CD14-positive monocyte (primary cell): ENCODE measurements at regions of chr3 and their contacts with region 1.

Region 1: GRCh38 chr3:169863458-169863899 is 6.3 kb downstream of the LRRC31 start:
- DNase-seq: peak; percentile 72 to 80 (median 80)
- H3K4me3 ChIP-seq: no peak overlapping the region
- H3K4me3 Mint-ChIP-seq: no peak overlapping the region
- H3K27ac ChIP-seq: no peak overlapping the region
- H3K27ac Mint-ChIP-seq: no peak overlapping the region
- H3K4me1 ChIP-seq: peaks cover 10 to 13% of the 10 kb centered on the region in 2 donors
- H3K4me1 Mint-ChIP-seq: peaks cover 18% of the 10 kb centered on the region
- H3K27me3 ChIP-seq: no peaks in the 10 kb centered on the region
- H3K27me3 Mint-ChIP-seq: peaks cover 3 to 14% (median 3%) of the 10 kb centered on the region in 3 donors
- CTCF ChIP-seq: peak; percentile 94

Region 2: DNA sequence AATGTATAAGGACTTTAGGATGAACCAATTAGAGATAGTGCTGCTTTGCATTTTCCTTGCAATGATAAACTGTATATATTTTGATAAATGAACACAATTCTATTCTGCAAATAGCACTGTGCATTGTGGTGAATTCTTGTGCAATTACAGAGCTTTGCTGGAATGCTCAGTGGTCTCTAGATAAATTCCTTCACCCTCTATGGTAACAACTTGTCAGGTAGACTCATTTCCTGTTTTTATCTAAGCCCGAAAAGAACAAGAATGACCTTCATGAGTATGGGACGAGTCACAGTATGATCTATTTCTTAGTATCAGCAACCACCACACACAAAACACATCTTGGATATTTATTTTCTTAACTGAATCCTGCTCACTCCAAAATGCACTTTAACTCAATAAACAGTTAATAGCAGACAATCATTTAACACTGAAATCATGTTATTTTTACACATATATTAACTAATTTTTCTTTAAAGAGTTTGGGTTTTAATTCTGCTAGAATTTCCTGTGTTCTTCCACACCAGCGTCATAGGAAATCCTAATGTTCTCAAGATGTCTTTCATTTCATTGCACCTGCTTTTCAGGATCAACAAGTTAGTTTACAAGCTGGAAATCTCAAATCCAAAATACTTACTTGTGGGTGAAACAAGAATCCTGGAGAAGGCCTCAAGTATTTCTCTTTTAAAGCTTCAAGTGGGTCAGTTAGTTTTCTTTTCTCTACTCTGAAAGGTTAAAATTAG is 751.2 kb before region 1 on chr3:
- intact Hi-C with region 1: no loop called
- DNase-seq: no peak
- H3K4me3 ChIP-seq: no peak overlapping the region
- H3K4me3 Mint-ChIP-seq: no peak overlapping the region
- H3K27ac ChIP-seq: no peak overlapping the region
- H3K27ac Mint-ChIP-seq: no peak overlapping the region
- H3K4me1 ChIP-seq: no peaks in the 10 kb centered on the region
- H3K4me1 Mint-ChIP-seq: no peaks in the 10 kb centered on the region
- H3K27me3 ChIP-seq: no peaks in the 10 kb centered on the region
- H3K27me3 Mint-ChIP-seq: peaks cover 0 to 2% (median 0%) of the 10 kb centered on the region in 3 donors
- CTCF ChIP-seq: no peak

Region 3: GRCh38 chr3:169764452-169765274 is 98.8 kb before region 1 on chr3 and contains the start of gene TERC:
- intact Hi-C with region 1: loop called in 1 of 2 experiments (anchors 10 kb)
- DNase-seq: peak; percentile 80 to 89 (median 81)
- H3K4me3 ChIP-seq: peak within 1 kb of the TSS; percentile 70 to 95 (median 79)
- H3K4me3 Mint-ChIP-seq: peak within 1 kb of the TSS; percentile 98 to 99
- H3K27ac ChIP-seq: peak within 1 kb of the TSS; percentile 88 to 93
- H3K27ac Mint-ChIP-seq: peak within 1 kb of the TSS; percentile 91 to 99 (median 96)
- H3K4me1 ChIP-seq: peaks cover 12 to 14% of the 10 kb centered on the region in 2 donors
- H3K4me1 Mint-ChIP-seq: peaks cover 12% of the 10 kb centered on the region
- H3K27me3 ChIP-seq: no peaks in the 10 kb centered on the region
- H3K27me3 Mint-ChIP-seq: peaks cover 2 to 6% (median 3%) of the 10 kb centered on the region in 3 donors
- CTCF ChIP-seq: no peak
- polyA plus RNA-seq, gene TERC: 0.33 to 0.76 TPM in 2 of 3 donors, not detected in the other

Region 4: GRCh38 chr3:169780742-169781141 is 82.7 kb before region 1 on chr3:
- intact Hi-C with region 1: no loop called
- DNase-seq: no peak
- H3K4me3 ChIP-seq: no peak overlapping the region
- H3K4me3 Mint-ChIP-seq: no peak overlapping the region
- H3K27ac ChIP-seq: no peak overlapping the region
- H3K27ac Mint-ChIP-seq: no peak overlapping the region
- H3K4me1 ChIP-seq: no peaks in the 10 kb centered on the region
- H3K4me1 Mint-ChIP-seq: peaks cover 8% of the 10 kb centered on the region
- H3K27me3 ChIP-seq: no peaks in the 10 kb centered on the region
- H3K27me3 Mint-ChIP-seq: no peaks in the 10 kb centered on the region
- CTCF ChIP-seq: no peak

Region 5: GRCh38 chr3:169923189-169923588 is 59.7 kb after region 1 on chr3:
- intact Hi-C with region 1: loop called in 1 of 2 experiments (anchors 10 kb)
- DNase-seq: no peak
- H3K4me3 ChIP-seq: no peak overlapping the region
- H3K4me3 Mint-ChIP-seq: no peak overlapping the region
- H3K27ac ChIP-seq: no peak overlapping the region
- H3K27ac Mint-ChIP-seq: peak overlapping the region in 1 of 7 donors; percentile 46
- H3K4me1 ChIP-seq: no peaks in the 10 kb centered on the region
- H3K4me1 Mint-ChIP-seq: no peaks in the 10 kb centered on the region
- H3K27me3 ChIP-seq: no peaks in the 10 kb centered on the region
- H3K27me3 Mint-ChIP-seq: no peaks in the 10 kb centered on the region
- CTCF ChIP-seq: no peak

Region 6: DNA sequence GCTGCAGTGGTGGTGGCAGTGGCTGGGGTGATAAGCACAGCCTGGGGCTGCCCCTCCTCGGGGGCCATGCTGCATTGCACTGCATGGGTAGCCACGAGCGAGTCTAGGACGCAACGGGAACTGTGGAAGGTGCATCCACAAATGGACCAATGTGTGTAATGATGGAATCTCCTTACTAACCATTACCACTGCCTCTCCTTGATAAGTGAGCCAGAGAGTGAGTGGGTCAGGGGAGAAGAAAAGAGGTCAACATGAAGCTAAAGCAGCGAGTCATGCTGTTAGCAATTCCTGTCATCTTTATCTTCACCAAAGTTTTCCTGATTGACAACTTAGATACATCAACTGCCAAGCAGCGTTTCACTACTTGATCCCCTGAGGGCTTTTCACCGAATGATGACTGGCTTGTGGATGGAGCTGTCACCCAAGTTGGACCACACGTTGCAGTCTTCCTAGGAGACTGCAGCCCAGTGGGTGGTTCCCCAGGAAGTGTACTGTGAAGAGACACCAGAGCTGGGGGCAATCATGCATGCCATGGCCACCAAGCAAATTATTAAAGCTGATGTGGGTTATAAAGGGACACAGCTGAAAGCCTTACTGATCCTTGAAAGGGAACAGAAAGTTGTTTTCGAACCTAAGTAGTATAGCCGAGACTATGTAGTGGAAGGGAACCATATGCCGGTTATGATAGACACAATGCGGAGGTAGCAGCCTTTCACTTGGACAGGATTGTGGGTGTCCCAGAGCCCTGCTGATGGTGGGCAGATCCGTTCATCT is 68.5 kb after region 1 on chr3:
- intact Hi-C with region 1: loop called (anchors 10 kb)
- DNase-seq: no peak
- H3K4me3 ChIP-seq: no peak overlapping the region
- H3K4me3 Mint-ChIP-seq: no peak overlapping the region
- H3K27ac ChIP-seq: no peak overlapping the region
- H3K27ac Mint-ChIP-seq: no peak overlapping the region
- H3K4me1 ChIP-seq: peaks cover 0 to 3% of the 10 kb centered on the region in 2 donors
- H3K4me1 Mint-ChIP-seq: peaks cover 4% of the 10 kb centered on the region
- H3K27me3 ChIP-seq: no peaks in the 10 kb centered on the region
- H3K27me3 Mint-ChIP-seq: peaks cover 0 to 10% (median 2%) of the 10 kb centered on the region in 3 donors
- CTCF ChIP-seq: no peak

Region 7: DNA sequence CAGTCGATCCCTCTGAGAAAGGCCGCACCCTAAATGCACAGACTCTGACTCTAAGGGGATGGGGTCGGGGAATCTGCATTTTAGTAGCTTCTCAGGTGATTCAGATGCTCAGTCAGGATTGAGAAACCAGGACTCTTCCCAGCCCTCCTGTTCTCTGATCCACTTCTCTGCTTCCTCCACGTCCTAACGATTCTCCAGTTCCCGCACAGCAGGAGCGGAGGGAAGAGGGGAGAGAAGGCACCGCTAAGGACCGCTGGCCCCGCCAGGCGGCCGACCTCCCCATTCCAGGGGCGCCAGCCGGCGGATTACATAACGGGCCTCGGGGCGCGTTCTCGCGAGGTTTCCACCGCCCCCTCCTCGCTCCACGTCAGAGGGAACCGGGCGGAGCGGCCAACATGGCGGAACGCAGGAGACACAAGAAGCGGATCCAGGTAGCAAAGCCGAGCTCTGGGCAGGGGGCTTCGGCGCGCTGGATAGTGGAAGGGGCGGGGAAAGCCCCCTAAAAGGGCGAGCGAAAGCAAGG is 103.0 kb after region 1 on chr3 and contains the start of gene SEC62:
- intact Hi-C with region 1: loop called (anchors 10 kb)
- DNase-seq: peak; percentile 93 to 95 (median 94)
- H3K4me3 ChIP-seq: peak within 1 kb of the TSS; percentile 78 to 88 (median 81)
- H3K4me3 Mint-ChIP-seq: peak within 1 kb of the TSS; percentile 93 to 94
- H3K27ac ChIP-seq: peak within 1 kb of the TSS; percentile 95 to 98
- H3K27ac Mint-ChIP-seq: peak within 1 kb of the TSS; percentile 96 to 99 (median 98)
- H3K4me1 ChIP-seq: peaks cover 27 to 36% of the 10 kb centered on the region in 2 donors
- H3K4me1 Mint-ChIP-seq: peaks cover 46% of the 10 kb centered on the region
- H3K27me3 ChIP-seq: no peaks in the 10 kb centered on the region
- H3K27me3 Mint-ChIP-seq: peaks cover 0 to 2% (median 2%) of the 10 kb centered on the region in 3 donors
- CTCF ChIP-seq: peak; percentile 59
- polyA plus RNA-seq, gene SEC62: 15.6 to 117 (median 95.2) TPM

Region 8: DNA sequence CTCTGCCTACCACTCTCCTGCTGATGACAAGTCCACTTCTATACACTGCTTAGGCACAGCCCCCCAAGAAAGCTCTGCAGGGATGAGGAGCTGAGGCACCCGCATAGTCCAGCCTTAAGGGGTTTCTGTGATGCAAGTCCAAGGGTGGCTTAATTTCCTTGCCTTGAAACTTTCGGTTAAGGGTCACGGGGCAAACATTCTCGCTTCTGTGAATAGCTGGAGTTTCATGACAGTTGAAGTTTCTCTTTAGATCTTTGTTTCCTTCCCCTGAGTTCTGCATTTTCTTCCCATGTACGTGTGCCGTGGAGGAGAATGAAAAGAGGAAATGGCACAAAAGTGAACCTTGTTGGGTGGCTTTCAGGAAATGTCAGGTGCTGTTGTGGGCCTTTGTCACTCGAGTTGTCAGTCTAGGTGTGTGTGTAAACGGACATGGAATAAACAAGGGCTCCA is 181.3 kb after region 1 on chr3:
- intact Hi-C with region 1: loop called (anchors 10 kb)
- DNase-seq: peak; percentile 66 to 89 (median 79)
- H3K4me3 ChIP-seq: peak overlapping the region; percentile 20 to 67 (median 26)
- H3K4me3 Mint-ChIP-seq: peak overlapping the region; percentile 71 to 87
- H3K27ac ChIP-seq: peak overlapping the region; percentile 75 to 95
- H3K27ac Mint-ChIP-seq: peak overlapping the region; percentile 85 to 93 (median 91)
- H3K4me1 ChIP-seq: peaks cover 26% of the 10 kb centered on the region in 2 donors
- H3K4me1 Mint-ChIP-seq: peaks cover 33% of the 10 kb centered on the region
- H3K27me3 ChIP-seq: no peaks in the 10 kb centered on the region
- H3K27me3 Mint-ChIP-seq: peaks cover 0 to 3% (median 0%) of the 10 kb centered on the region in 3 donors
- CTCF ChIP-seq: no peak

Region 9: DNA sequence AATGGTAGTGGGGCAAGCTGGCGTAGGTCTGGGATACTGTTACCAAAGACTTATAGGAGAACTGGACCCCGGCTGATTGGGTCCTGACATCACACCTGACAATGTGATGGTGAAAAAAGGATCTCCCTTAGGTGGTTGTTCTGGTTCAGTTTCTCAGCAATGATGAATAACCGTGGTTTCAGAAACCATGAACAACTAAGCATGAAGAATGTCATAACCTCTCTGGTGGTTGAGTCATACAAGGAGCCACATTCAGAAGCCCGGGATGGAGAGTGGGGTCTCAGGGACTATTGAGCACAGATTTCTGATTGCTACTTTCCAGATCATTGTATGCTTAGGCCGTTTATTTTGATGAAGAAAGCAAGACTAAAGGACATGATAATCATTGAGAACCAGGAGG is 191.7 kb after region 1 on chr3:
- intact Hi-C with region 1: loop called in 1 of 2 experiments (anchors 10 kb)
- DNase-seq: peak in 1 of 3 donors; percentile 17
- H3K4me3 ChIP-seq: no peak overlapping the region
- H3K4me3 Mint-ChIP-seq: no peak overlapping the region
- H3K27ac ChIP-seq: no peak overlapping the region
- H3K27ac Mint-ChIP-seq: no peak overlapping the region
- H3K4me1 ChIP-seq: peaks cover 0 to 3% of the 10 kb centered on the region in 2 donors
- H3K4me1 Mint-ChIP-seq: peaks cover 12% of the 10 kb centered on the region
- H3K27me3 ChIP-seq: no peaks in the 10 kb centered on the region
- H3K27me3 Mint-ChIP-seq: no peaks in the 10 kb centered on the region
- CTCF ChIP-seq: no peak